Panc1 (cell line): ENCODE measurements at regions of chr1 and their contacts with region 1.

Region 1: DNA sequence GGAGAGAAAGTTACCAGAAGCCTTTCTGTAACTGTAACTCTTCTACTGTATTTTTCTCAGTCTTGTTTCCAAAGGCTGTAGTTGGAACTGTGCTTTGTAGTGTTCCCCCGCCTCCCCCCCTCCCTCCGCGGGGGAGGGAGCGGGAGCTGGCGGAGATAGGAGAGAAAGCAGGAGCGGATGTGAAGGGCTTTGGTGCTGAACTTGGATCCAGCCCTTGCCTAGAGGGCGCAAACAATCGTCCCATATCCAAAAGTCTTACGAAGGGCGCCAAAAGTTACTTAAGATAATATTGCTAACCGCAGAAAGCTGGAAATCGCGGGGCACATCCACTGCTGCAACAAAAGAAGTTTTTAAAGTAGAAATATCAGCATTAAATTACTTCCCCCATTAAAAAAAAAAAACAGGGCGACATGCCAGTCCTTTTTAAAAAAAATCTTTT is 2.4 kb upstream of the NFIA start:
- DNase-seq: peak; percentile 65
- ATAC-seq: peak; percentile 54
- H3K4me3 ChIP-seq: peak overlapping the region; percentile 24 to 54
- H3K27ac ChIP-seq: peak overlapping the region; percentile 88
- H3K4me1 ChIP-seq: peaks cover 49% of the 10 kb centered on the region
- H3K27me3 ChIP-seq: no peaks in the 10 kb centered on the region
- CTCF ChIP-seq: peak; percentile 66

Region 2: GRCh38 chr1:60994369-60994768 is 85.5 kb before region 1 on chr1:
- CTCF ChIA-PET with region 1: no interaction called
- POLR2A ChIA-PET with region 1: no interaction called
- in situ Hi-C with region 1: no loop called
- intact Hi-C with region 1: no loop called
- DNase-seq: no peak
- ATAC-seq: no peak
- H3K4me3 ChIP-seq: no peak overlapping the region
- H3K27ac ChIP-seq: no peak overlapping the region
- H3K4me1 ChIP-seq: no peaks in the 10 kb centered on the region
- H3K27me3 ChIP-seq: no peaks in the 10 kb centered on the region
- CTCF ChIP-seq: no peak

Region 3: DNA sequence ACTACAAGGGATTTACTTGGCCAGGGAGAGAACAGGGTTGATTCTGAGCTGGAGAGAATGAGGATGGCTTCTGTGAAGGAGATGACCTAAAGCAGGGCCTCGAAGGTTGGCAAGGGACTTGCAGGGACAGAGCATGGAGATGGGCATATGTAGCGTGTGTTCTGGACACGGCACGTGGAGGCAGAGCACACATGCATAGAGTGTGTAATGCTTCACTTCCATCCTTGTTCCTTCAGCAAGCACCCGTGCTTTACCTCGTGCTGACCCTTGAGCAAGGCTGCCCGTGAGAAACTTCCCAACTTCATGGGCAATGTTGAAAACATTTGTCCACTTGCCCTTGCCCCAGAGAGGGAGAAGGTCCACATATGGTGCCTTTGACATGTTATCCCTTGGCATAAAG is 35.5 kb after region 1 on chr1:
- CTCF ChIA-PET with region 1: no interaction called
- POLR2A ChIA-PET with region 1: no interaction called
- in situ Hi-C with region 1: no loop called
- intact Hi-C with region 1: no loop called
- DNase-seq: no peak
- ATAC-seq: no peak
- H3K4me3 ChIP-seq: no peak overlapping the region
- H3K27ac ChIP-seq: no peak overlapping the region
- H3K4me1 ChIP-seq: peaks cover under 1% of the 10 kb centered on the region; the same call in 1 of the 2 replicates
- H3K27me3 ChIP-seq: no peaks in the 10 kb centered on the region
- CTCF ChIP-seq: no peak

Region 4: GRCh38 chr1:61157468-61157987 is 77.6 kb after region 1 on chr1:
- CTCF ChIA-PET with region 1: no interaction called
- POLR2A ChIA-PET with region 1: no interaction called
- in situ Hi-C with region 1: no loop called
- intact Hi-C with region 1: no loop called
- DNase-seq: no peak
- ATAC-seq: no peak
- H3K4me3 ChIP-seq: no peak overlapping the region
- H3K27ac ChIP-seq: peak overlapping the region; percentile 30; the same call in 1 of the 2 replicates
- H3K4me1 ChIP-seq: peaks cover 7% of the 10 kb centered on the region; the same call in 1 of the 2 replicates
- H3K27me3 ChIP-seq: no peaks in the 10 kb centered on the region
- CTCF ChIP-seq: no peak

Region 5: DNA sequence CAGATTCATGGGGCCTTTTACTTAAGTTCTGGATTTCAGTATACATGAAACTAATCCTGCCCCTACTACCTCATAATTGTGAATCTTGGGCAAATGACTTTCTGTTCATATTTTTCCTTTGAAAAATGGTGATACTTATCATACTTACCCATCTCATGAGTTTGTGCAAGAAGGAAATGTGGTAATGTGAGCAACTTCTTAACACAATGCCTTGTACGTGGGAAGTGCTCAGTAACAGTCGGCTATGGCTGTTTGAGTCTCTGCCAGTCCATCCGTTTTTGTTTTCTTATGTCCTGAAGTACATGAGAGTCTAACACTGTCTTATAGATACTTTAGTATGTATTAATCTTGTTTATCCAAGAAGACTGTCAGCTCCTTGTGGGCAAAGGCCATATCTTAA is 748.9 kb after region 1 on chr1:
- CTCF ChIA-PET with region 1: no interaction called
- POLR2A ChIA-PET with region 1: interaction called, 13 read pairs
- in situ Hi-C with region 1: no loop called
- intact Hi-C with region 1: no loop called
- DNase-seq: no peak
- ATAC-seq: no peak
- H3K4me3 ChIP-seq: no peak overlapping the region
- H3K27ac ChIP-seq: no peak overlapping the region
- H3K4me1 ChIP-seq: no peaks in the 10 kb centered on the region
- H3K27me3 ChIP-seq: no peaks in the 10 kb centered on the region
- CTCF ChIP-seq: no peak